ENCODE measurements at regions of chr17 and their contacts with region 1.

Region 1: DNA sequence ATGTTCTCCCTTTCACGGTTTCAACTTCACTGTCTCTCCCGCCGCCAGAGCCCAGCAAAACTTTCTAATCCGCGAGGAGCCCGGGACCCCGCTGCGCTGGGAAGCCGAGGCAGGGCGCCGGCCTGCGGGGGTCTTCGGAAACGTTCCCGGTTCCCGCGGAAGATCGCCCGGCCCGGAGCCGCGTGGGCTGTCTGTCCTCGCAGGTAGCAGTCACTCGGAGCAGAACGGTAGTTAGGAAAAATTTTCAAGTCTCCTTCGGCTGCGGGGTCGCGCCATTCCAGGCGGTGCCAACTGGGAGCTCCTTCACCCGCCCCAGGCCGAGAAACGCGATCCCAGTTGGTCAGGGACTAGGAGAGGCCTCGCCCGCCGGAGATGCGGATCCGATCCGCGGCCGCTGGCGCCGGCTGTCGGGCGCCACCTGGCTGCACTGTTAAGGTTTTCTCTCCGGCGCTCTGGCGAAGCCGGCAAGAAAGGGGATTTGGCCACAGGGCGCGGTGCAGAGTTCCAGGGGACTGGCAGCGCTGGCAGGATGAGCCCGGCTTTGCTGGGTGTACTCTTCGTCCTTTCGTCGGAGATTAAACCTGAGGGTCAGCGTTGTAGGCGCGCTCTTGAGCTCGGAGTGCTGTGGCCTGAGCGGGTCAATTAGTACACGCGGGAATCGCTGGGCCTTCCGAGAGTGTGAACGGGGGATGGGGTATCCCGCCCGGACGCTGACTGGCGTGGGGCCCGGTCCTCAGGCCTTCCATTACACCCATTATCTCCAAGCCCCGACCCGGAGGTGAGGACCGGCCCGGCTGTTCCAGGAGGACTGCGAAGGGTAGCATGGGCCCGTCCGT is 135.4 kb downstream of the KCNJ12 start:
- DNase-seq: peak; percentile 81
- ATAC-seq: peak; percentile 79
- H3K4me3 ChIP-seq: peak overlapping the region; percentile 7 to 69 (median 56)
- H3K4me3 Mint-ChIP-seq: peak overlapping the region; percentile 66
- H3K27ac ChIP-seq: peak overlapping the region in 1 of 2 donors; percentile 25
- H3K27ac Mint-ChIP-seq: peak overlapping the region; percentile 56
- H3K4me1 ChIP-seq: peaks cover 15 to 22% of the 10 kb centered on the region in 2 donors
- H3K4me1 Mint-ChIP-seq: peaks cover 28% of the 10 kb centered on the region
- H3K27me3 ChIP-seq: peaks cover 0 to 17% (median 4%) of the 10 kb centered on the region in 4 experiments
- H3K27me3 Mint-ChIP-seq: peaks cover 31% of the 10 kb centered on the region
- CTCF ChIP-seq: peak; percentile 81

Region 2: DNA sequence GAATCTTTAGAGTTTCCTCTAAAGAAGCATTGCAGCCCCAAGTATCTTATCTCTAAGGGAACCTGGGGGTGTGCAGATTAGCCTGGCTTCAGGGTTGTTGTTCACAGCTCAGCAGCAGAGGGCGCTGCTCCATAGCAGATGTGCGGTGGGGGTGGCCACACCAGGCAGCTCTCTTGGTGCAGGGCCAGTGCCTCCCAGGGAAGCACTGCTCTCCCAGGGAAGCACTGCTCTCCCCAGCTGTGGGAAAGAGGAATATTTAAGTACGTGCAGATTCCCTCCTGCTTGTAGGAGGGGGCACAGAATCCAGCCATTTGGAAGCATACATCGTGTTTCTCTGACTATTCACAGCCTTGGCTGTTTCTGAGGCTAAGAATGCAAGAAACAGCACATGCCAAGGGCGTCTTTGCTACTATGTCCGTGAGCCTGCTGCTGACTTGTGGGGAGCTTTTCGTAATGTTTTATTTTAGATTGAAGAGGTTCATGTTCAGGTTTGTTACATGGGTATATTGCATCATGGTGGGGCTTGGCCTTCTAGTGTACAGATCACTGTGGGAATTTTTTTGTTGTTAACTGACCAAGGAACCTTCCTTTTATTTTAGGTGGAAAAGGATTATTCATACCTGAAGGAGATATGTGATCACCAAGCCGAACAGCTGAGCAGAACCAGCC is 1284.6 kb before region 1 on chr17:
- CTCF ChIA-PET with region 1: interaction called, 3 read pairs
- POLR2A ChIA-PET with region 1: no interaction called
- intact Hi-C with region 1: loop called (anchors 5 kb)
- DNase-seq: peak; percentile 66
- ATAC-seq: peak; percentile 53
- H3K4me3 ChIP-seq: no peak overlapping the region
- H3K4me3 Mint-ChIP-seq: no peak overlapping the region
- H3K27ac ChIP-seq: no peak overlapping the region
- H3K27ac Mint-ChIP-seq: no peak overlapping the region
- H3K4me1 ChIP-seq: no peaks in the 10 kb centered on the region
- H3K4me1 Mint-ChIP-seq: no peaks in the 10 kb centered on the region
- H3K27me3 ChIP-seq: no peaks in the 10 kb centered on the region
- H3K27me3 Mint-ChIP-seq: no peaks in the 10 kb centered on the region
- CTCF ChIP-seq: peak; percentile 82

Region 3: DNA sequence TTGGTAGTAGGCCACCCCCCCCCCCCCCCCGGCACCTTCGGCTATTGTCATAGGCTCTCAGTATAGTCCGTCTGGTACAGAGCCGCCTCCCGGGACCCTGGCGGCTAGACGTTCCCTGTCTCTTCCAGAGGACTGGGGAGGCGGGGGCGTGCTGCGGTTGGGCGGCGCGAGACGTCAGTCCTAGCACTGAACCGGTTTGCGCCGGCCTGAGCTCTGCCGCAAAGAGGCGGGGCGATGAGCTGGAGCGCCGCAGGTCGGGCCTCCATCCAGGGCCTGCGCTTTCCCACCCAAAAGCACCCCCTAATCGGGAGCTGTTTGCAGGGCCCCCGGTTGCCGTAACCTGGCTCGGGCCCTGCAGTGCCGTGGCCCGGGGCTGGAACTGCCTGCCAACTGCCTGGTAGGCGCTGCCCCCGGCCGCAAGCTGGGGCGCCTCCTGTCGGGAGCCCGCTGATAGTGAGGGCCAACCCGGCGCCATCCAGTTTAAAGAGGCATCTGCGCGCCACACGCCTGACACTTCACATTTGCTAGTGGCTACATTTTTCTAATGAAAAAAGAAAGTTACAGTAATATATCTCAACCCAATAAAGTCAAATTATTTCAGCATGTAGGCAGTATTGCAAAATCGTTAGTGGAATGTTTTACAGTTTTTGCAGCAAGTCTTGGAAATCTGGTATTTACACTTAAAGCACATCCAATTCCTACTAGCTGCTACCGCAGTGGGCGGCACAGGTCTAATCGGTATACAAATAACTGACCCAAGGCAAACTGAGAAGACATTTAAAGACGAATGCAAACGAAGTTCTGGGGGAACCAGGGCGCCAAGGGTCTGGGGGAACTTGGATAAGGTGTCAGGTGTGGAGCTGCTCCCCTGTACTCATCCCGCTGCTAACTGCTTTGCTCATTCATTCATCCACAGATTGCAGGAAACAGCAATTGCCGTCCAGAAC is 468.0 kb before region 1 on chr17:
- CTCF ChIA-PET with region 1: interaction called, 6 read pairs
- POLR2A ChIA-PET with region 1: no interaction called
- intact Hi-C with region 1: loop called (anchors 5 kb)
- DNase-seq: peak; percentile 98
- ATAC-seq: peak; percentile 75
- H3K4me3 ChIP-seq: peak overlapping the region; percentile 63 to 68 (median 65)
- H3K4me3 Mint-ChIP-seq: peak overlapping the region; percentile 81
- H3K27ac ChIP-seq: peak overlapping the region; percentile 95
- H3K27ac Mint-ChIP-seq: peak overlapping the region; percentile 90
- H3K4me1 ChIP-seq: peaks cover 24 to 37% of the 10 kb centered on the region in 2 donors
- H3K4me1 Mint-ChIP-seq: peaks cover 32% of the 10 kb centered on the region
- H3K27me3 ChIP-seq: no peaks in the 10 kb centered on the region
- H3K27me3 Mint-ChIP-seq: no peaks in the 10 kb centered on the region
- CTCF ChIP-seq: peak; percentile 92

Region 4: DNA sequence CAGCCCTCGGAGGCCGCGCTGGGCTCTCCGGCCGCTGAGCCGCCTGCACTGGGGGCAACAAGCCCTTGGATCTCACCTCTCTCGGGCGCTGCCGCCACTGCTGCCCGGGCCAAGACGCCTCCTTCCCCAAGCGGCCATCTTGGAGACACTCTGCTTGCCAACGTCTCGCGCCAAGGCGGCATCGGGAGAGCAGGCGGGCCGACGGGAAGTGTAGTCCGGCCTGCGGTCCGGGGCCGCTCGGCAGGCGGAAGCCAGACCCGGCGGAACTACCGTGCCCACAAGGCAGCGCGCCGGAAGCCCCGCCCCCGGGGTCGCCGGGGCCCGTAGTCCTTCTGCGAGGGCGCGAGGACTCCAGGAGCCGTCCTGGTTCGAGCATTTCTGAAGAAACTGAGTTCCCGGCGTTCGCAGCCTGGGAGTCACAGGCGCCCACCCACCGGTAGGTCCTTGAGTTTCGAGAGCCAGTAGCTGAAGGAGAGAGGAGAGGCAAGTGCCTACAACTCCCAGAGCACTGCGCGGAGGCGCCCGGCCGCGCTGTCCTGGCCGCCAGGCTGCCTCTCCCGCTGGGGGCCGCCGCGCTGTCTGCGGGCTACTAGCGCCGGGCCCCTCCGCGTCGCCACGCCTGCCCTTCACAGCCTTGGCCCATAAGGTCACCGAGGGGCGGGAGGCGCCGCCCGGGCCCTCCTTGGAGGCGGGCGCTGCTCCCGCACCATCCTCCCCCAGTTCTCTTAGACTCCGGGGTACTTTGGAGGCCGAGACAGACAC is 297.4 kb before region 1 on chr17 and contains the start of gene TMEM11:
- CTCF ChIA-PET with region 1: interaction called, 5 read pairs
- POLR2A ChIA-PET with region 1: no interaction called
- intact Hi-C with region 1: loop called (anchors 1 kb)
- DNase-seq: peak; percentile 96
- ATAC-seq: peak; percentile 91
- H3K4me3 ChIP-seq: peak within 1 kb of the TSS; percentile 68 to 99 (median 89)
- H3K4me3 Mint-ChIP-seq: peak within 1 kb of the TSS; percentile 93
- H3K27ac ChIP-seq: peak within 1 kb of the TSS; percentile 85 to 91
- H3K27ac Mint-ChIP-seq: peak within 1 kb of the TSS; percentile 92
- H3K4me1 ChIP-seq: peaks cover 31 to 37% of the 10 kb centered on the region in 2 donors
- H3K4me1 Mint-ChIP-seq: peaks cover 49% of the 10 kb centered on the region
- H3K27me3 ChIP-seq: no peaks in the 10 kb centered on the region
- H3K27me3 Mint-ChIP-seq: no peaks in the 10 kb centered on the region
- CTCF ChIP-seq: no peak
- total RNA-seq, gene TMEM11: 24.7 and 25.3 TPM in 2 replicates

Region 5: GRCh38 chr17:21318439-21318838 is 193.1 kb before region 1 on chr17:
- CTCF ChIA-PET with region 1: interaction called, 3 read pairs
- POLR2A ChIA-PET with region 1: no interaction called
- intact Hi-C with region 1: loop called (anchors 10 kb)
- DNase-seq: no peak
- ATAC-seq: no peak
- H3K4me3 ChIP-seq: no peak overlapping the region
- H3K4me3 Mint-ChIP-seq: no peak overlapping the region
- H3K27ac ChIP-seq: no peak overlapping the region
- H3K27ac Mint-ChIP-seq: no peak overlapping the region
- H3K4me1 ChIP-seq: peaks cover 0 to 9% of the 10 kb centered on the region in 2 donors
- H3K4me1 Mint-ChIP-seq: peaks cover 7% of the 10 kb centered on the region
- H3K27me3 ChIP-seq: peaks cover 0 to under 1% (median 0%) of the 10 kb centered on the region in 4 experiments
- H3K27me3 Mint-ChIP-seq: peaks cover 3% of the 10 kb centered on the region
- CTCF ChIP-seq: no peak

Region 6: GRCh38 chr17:21532763-21533385 is 21.3 kb after region 1 on chr17:
- CTCF ChIA-PET with region 1: interaction called, 18 read pairs
- POLR2A ChIA-PET with region 1: no interaction called
- intact Hi-C with region 1: no loop called
- DNase-seq: no peak
- ATAC-seq: no peak
- H3K4me3 ChIP-seq: no peak overlapping the region
- H3K4me3 Mint-ChIP-seq: no peak overlapping the region
- H3K27ac ChIP-seq: no peak overlapping the region
- H3K27ac Mint-ChIP-seq: no peak overlapping the region
- H3K4me1 ChIP-seq: no peaks in the 10 kb centered on the region
- H3K4me1 Mint-ChIP-seq: no peaks in the 10 kb centered on the region
- H3K27me3 ChIP-seq: no peaks in the 10 kb centered on the region
- H3K27me3 Mint-ChIP-seq: no peaks in the 10 kb centered on the region
- CTCF ChIP-seq: no peak

Measured in B cell (primary cell).